ENCODE measurements at regions of chr9 and their contacts with region 1.

Region 1: DNA sequence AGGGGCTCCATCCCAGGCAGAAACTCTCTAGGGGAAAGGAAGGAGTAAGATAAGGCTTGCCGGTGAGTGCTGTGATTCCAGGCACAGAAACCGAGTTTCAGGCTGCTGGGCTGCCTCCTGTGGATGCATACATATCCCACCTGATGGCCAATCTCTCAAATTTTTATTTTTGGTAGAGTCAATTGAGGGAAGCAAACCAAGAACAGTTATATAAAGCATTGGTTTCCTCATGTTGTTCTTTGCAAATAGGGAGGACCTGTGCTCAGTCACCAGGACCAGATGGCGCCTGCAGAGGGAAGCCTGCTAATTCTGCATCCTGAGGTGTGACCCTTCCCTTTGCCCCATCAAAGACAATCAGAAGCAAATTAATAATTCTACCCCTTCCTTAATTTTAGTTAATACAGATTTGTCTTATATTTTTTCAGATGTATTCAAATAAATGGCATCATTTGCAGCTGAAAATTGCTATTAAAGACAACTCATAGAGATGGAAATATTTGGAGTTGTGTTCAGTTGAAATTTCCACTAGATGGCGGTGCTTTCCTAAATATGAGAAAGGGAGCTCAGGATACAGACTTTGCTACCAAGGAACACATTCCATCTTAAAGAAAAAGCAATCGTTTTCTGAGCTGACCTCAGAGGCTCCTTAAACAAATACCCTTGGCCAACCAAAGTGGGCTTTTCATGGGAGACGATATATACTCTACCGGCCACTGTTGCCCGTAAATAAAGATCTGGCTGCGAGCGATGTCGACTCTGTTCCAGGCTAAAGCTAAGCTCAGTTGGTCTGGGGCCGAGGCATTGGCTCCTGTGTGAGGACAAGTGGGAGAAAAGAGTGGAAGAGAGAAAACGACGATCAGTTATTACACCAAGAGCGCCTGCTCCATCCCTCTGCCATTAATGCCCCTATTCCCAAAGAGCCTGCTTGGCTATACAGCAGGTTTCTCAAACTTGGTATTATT is 225.7 kb upstream of the KLF9 start:
- DNase-seq: peak; percentile 6
- ATAC-seq: peak; percentile 61; the same call in 2 of the 3 replicates
- H3K4me3 ChIP-seq: no peak overlapping the region
- H3K27ac ChIP-seq: no peak overlapping the region
- H3K4me1 ChIP-seq: no peaks in the 10 kb centered on the region
- H3K27me3 ChIP-seq: no peaks in the 10 kb centered on the region
- CTCF ChIP-seq: peak; percentile 68
- EP300 ChIP-seq: no peak
- POLR2A ChIP-seq: no peak
- RAD21 ChIP-seq: peak; percentile 41; the same call in 1 of the 2 replicates

Region 2: GRCh38 chr9:70656281-70656680 is 16.1 kb after region 1 on chr9:
- CTCF ChIA-PET with region 1: no interaction called
- POLR2A ChIA-PET with region 1: no interaction called
- in situ Hi-C with region 1: no loop called
- intact Hi-C with region 1: no loop called
- DNase-seq: no peak
- ATAC-seq: no peak
- H3K4me3 ChIP-seq: no peak overlapping the region
- H3K27ac ChIP-seq: no peak overlapping the region
- H3K4me1 ChIP-seq: no peaks in the 10 kb centered on the region
- H3K27me3 ChIP-seq: no peaks in the 10 kb centered on the region
- CTCF ChIP-seq: no peak
- EP300 ChIP-seq: no peak
- POLR2A ChIP-seq: no peak
- RAD21 ChIP-seq: no peak

Region 3: DNA sequence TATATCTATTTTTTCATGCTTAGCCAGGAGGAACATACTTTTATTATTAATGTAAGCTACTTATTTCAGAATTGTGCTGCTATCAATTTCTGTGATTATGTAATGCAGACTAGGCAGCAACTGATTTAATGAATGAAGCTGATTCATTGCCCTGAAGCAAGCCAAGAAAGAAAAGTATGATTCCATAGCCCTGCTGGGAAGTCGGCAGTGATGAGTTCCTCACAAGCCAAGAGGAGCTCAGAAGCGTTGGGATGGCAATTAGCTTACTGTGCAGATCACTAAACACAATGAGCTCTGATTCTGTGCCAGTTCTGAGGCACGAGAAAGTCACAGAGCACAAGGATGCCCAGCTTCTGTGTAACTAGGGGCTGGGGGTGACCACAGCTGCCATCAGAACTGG is 28.6 kb after region 1 on chr9:
- CTCF ChIA-PET with region 1: no interaction called
- POLR2A ChIA-PET with region 1: no interaction called
- in situ Hi-C with region 1: no loop called
- intact Hi-C with region 1: no loop called
- DNase-seq: no peak
- ATAC-seq: no peak
- H3K4me3 ChIP-seq: no peak overlapping the region
- H3K27ac ChIP-seq: no peak overlapping the region
- H3K4me1 ChIP-seq: no peaks in the 10 kb centered on the region
- H3K27me3 ChIP-seq: no peaks in the 10 kb centered on the region
- CTCF ChIP-seq: no peak
- EP300 ChIP-seq: no peak
- POLR2A ChIP-seq: no peak
- RAD21 ChIP-seq: no peak

Region 4: DNA sequence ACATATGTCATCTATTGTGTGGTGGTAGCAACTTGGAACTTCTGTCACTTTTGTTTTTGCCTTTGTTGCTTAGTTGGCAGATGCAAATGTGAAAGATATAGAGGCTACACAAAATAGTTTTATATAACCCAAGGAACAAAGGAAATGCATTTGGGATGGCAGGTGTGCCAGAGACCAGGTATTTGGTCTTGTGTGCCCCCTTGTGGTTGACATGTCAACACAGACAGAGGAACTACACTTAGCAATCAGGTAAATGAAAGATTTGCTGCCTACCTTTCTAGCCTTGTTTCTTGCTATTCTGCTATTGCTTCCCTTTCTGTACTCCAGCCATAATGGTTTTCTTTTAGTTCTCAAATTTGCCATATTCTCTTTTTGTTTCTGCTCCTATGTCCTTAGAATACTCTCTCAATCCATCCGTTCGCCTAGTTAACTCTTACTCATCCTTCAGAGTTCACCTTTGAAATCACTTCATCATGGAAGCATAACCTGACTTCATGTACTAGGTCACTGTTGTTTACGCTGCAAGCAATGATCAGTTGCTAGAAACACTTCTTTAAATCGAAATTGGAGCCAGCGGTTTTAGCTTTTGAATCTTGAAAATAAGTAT is 361.7 kb after region 1 on chr9:
- CTCF ChIA-PET with region 1: interaction called, 7 read pairs
- POLR2A ChIA-PET with region 1: no interaction called
- in situ Hi-C with region 1: loop called (anchors 5 kb)
- intact Hi-C with region 1: no loop called
- DNase-seq: peak; percentile 10
- ATAC-seq: peak; percentile 64; the same call in 2 of the 3 replicates
- H3K4me3 ChIP-seq: no peak overlapping the region
- H3K27ac ChIP-seq: no peak overlapping the region
- H3K4me1 ChIP-seq: no peaks in the 10 kb centered on the region
- H3K27me3 ChIP-seq: no peaks in the 10 kb centered on the region
- CTCF ChIP-seq: peak; percentile 66
- EP300 ChIP-seq: no peak
- POLR2A ChIP-seq: no peak
- RAD21 ChIP-seq: no peak

Region 5: DNA sequence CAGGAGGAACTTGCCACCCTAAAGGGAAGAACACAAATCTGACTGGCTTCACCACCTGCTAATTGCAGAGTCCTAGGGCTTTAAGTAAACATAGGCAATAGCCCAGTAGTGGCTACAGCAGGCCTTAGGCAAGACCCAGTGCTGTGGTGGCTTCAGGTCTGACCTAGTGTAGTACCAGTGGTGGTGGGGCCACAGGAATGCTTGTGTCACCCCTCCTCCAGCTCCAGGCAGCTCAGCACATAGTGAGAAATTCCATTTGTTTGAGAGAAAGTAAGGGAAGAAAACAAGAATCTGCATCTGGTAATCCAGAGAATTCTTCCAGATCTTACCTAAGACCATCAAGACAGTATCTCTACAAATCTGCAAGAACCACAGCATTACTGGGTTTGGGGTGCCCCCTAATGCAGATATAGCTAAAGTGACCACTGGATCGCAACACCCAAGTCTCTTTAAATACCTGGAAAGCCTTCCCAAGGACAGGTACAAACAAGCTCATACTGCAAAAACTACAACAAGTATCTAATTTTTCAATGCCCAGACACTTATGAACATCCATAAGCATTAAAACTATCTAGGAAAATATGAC is 583.9 kb after region 1 on chr9:
- CTCF ChIA-PET with region 1: interaction called, 4 read pairs
- POLR2A ChIA-PET with region 1: no interaction called
- in situ Hi-C with region 1: no loop called
- intact Hi-C with region 1: loop called (anchors 1 kb)
- DNase-seq: peak; percentile 7
- ATAC-seq: peak; percentile 53; the same call in 2 of the 3 replicates
- H3K4me3 ChIP-seq: no peak overlapping the region
- H3K27ac ChIP-seq: no peak overlapping the region
- H3K4me1 ChIP-seq: peaks cover 4% of the 10 kb centered on the region
- H3K27me3 ChIP-seq: no peaks in the 10 kb centered on the region
- CTCF ChIP-seq: peak; percentile 58
- EP300 ChIP-seq: no peak
- POLR2A ChIP-seq: no peak
- RAD21 ChIP-seq: no peak

Region 6: DNA sequence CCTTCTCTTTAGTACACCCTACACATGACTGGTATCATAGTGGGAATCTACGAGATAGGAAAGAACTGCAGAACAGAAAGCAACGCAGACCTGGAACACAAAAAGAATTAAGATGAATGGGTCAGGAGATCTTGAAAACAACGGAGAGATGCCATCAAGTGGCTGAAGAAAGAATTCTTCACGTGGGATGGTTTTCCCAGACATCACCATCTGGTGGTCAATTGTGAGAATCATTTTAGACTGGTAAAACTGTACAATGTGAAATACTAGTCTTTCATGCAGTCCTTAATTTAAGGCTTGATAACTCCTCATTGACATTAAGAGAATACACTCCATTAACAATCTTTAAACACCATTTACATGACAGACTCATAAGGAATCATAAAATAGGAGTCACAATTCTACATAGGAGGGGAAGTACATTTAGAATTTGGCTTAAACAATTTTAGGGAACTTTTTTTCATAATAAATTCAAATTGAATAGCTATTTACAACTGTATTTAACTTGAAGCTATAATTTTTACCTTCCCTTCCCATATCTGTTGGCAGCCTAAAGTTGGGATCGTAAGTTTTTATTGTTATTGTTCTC is 609.7 kb after region 1 on chr9:
- CTCF ChIA-PET with region 1: interaction called, 13 read pairs
- POLR2A ChIA-PET with region 1: no interaction called
- in situ Hi-C with region 1: loop called (anchors 5 kb)
- intact Hi-C with region 1: no loop called
- DNase-seq: peak; percentile 61
- ATAC-seq: peak; percentile 85
- H3K4me3 ChIP-seq: no peak overlapping the region
- H3K27ac ChIP-seq: no peak overlapping the region
- H3K4me1 ChIP-seq: 0 out of 2 replicates have a peak, but pooled peaks cover 6% of the 10 kb centered on the region
- H3K27me3 ChIP-seq: no peaks in the 10 kb centered on the region; a peak in 1 of 5 replicates
- CTCF ChIP-seq: peak; percentile 84
- EP300 ChIP-seq: no peak
- POLR2A ChIP-seq: no peak
- RAD21 ChIP-seq: peak; percentile 77

Measured in HepG2 (cell line).